CD4-positive, alpha-beta memory T cell (primary cell): ENCODE measurements at regions of chr11 and their contacts with region 1.

Region 1: DNA sequence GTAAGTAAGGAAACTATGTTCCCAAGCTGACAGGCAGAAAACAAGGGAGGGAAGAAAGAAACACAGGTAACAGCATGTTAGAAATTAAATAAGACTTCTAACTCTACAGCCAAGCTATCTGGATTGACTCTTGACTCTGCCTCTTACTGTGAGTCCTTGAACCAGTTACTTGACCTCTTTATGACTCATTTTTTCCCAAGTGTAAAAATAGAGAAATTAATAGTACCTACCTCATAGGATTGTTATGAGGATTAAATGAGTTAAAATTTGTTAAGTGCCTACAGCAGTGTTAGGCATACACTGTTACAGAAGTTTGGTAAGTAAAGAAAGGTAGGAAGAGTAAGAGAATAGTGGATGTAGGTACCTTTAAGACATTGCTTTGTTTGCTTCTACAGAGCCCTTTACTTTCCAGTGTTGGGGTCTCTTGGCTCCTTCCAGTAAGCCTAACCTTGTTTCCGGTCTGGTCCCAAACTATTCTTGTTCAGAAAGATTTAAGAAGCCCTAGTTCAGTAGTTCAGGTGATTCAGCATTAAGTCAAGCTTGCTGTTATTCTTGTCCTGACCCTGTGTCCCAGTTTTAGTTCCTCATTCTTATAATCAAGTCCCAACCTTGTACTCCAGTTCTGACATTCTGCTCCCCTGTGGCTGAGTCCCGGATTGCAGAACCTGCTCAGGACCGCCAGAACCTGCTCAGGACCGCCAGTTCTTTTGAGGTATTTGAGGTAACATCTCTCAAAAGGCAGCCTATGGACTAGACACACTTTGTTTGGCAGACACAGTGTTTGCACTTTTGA is 963.4 kb upstream of the CCDC90B start:
- DNase-seq: no peak
- H3K4me3 ChIP-seq: no peak overlapping the region
- H3K4me3 Mint-ChIP-seq: no peak overlapping the region
- H3K27ac ChIP-seq: no peak overlapping the region
- H3K27ac Mint-ChIP-seq: no peak overlapping the region
- H3K4me1 ChIP-seq: no peaks in the 10 kb centered on the region
- H3K4me1 Mint-ChIP-seq: no peaks in the 10 kb centered on the region
- H3K27me3 ChIP-seq: no peaks in the 10 kb centered on the region
- H3K27me3 Mint-ChIP-seq: no peaks in the 10 kb centered on the region

Region 2: GRCh38 chr11:84044706-84045105 is 204.8 kb before region 1 on chr11:
- CTCF ChIA-PET with region 1: no interaction called
- POLR2A ChIA-PET with region 1: no interaction called
- intact Hi-C with region 1: no loop called
- DNase-seq: no peak
- H3K4me3 ChIP-seq: no peak overlapping the region
- H3K4me3 Mint-ChIP-seq: no peak overlapping the region
- H3K27ac ChIP-seq: no peak overlapping the region
- H3K27ac Mint-ChIP-seq: no peak overlapping the region
- H3K4me1 ChIP-seq: no peaks in the 10 kb centered on the region
- H3K4me1 Mint-ChIP-seq: no peaks in the 10 kb centered on the region
- H3K27me3 ChIP-seq: no peaks in the 10 kb centered on the region
- H3K27me3 Mint-ChIP-seq: no peaks in the 10 kb centered on the region

Region 3: GRCh38 chr11:84193706-84194105 is 55.8 kb before region 1 on chr11:
- CTCF ChIA-PET with region 1: no interaction called
- POLR2A ChIA-PET with region 1: no interaction called
- intact Hi-C with region 1: loop called (anchors 10 kb)
- DNase-seq: no peak
- H3K4me3 ChIP-seq: no peak overlapping the region
- H3K4me3 Mint-ChIP-seq: no peak overlapping the region
- H3K27ac ChIP-seq: no peak overlapping the region
- H3K27ac Mint-ChIP-seq: no peak overlapping the region
- H3K4me1 ChIP-seq: no peaks in the 10 kb centered on the region
- H3K4me1 Mint-ChIP-seq: no peaks in the 10 kb centered on the region
- H3K27me3 ChIP-seq: no peaks in the 10 kb centered on the region
- H3K27me3 Mint-ChIP-seq: no peaks in the 10 kb centered on the region